ENCODE measurements at regions of chr3 and their contacts with region 1.

Region 1: DNA sequence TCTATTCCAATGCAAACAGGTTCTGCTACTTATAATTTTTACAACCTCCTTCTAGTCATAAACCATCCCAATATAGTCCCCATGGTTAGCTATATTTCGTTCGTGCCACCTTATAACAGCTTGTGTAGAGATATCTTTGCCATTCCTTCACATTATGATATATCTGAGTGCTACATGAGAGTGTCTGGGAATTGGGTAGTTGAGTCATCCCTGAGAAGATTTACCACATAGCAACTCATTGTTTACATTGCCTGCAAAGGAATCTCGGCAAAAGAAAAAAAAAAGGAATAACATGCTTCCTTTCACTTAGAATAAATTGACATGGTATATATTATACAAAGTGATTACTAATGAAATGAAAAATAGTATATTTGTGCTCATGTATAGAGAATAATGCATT is 86.0 kb upstream of the VGLL3 start:
- DNase-seq: no peak
- H3K4me3 Mint-ChIP-seq: no peak overlapping the region
- H3K27ac Mint-ChIP-seq: no peak overlapping the region
- H3K4me1 Mint-ChIP-seq: peaks cover 12% of the 10 kb centered on the region
- H3K27me3 Mint-ChIP-seq: no peaks in the 10 kb centered on the region
- CTCF ChIP-seq: no peak

Region 2: DNA sequence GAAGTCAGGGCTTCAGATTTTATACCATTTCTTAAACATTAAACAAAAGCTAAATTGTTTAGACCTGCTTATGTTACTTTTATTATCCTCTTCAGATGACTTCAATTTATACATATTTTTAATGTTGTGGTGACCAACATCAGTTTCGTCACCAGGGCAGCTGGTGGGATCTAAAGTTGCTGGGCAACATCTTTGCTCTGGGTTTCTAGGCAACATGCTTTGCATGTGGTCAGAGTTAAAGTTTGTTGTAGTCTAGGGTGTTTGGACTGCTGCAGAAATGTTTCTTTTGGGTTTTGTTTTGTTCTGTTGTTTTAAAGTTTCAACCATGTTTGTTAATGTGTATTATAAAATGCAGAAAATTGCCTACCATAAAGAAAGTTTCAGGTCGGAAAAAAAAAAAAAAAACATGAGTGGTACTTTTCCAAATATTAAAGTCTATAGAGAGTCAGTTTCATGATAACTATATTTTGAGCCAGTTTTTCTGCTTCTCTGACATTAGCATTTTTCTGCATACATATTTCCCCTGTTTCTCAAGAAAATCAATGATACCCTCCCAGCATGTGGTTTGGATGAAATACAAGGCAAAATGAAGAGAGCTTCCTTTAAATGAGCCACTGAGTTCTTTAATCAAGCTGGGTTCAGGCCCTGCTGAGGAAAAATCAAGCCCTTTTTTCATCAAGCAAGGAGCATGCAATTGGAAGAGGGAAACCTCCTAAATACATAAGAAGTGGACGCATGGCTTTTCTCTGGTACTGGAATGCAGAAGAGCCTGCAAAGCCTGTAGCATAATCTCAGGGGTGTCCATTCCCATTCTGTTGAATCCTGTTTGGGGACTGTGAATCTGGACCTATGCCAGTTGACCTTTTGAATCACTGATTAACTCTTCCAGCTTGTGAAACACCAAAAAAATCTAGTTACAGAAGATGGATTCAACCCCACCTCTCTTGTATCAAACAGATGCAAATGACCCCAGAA is 51.0 kb before region 1 on chr3:
- CTCF ChIA-PET with region 1: no interaction called
- intact Hi-C with region 1: loop called (anchors 5 kb)
- DNase-seq: peak; percentile 42
- H3K4me3 Mint-ChIP-seq: no peak overlapping the region
- H3K27ac Mint-ChIP-seq: peak overlapping the region; percentile 67
- H3K4me1 Mint-ChIP-seq: peaks cover 44% of the 10 kb centered on the region
- H3K27me3 Mint-ChIP-seq: no peaks in the 10 kb centered on the region
- CTCF ChIP-seq: no peak

Region 3: DNA sequence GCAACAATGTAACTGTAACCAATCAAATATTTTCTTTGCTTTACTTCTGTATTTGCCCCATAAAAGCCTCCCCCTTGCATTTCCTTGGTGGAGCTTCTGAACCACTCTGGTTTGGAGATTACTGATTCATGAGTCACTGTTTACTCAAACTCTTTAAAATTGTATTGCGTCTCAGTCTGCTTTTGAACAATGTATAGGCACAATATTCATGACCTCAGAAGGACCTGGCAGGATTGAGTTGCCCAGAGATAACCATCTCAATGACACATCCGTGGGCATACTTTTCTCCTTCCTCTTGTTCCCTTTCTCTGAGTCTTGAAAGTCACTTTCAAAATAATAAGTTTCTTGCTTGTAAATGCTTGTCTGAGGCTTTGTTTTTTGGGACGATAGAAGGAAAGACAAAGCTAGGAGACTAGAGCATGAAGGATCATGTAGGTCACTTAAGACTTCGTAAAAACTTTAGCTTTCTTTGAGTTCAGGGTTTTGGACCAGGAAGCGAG is 256.5 kb after region 1 on chr3:
- CTCF ChIA-PET with region 1: no interaction called
- intact Hi-C with region 1: no loop called
- DNase-seq: peak; percentile 59
- H3K4me3 Mint-ChIP-seq: peak overlapping the region; percentile 20
- H3K27ac Mint-ChIP-seq: peak overlapping the region; percentile 89
- H3K4me1 Mint-ChIP-seq: peaks cover 35% of the 10 kb centered on the region
- H3K27me3 Mint-ChIP-seq: no peaks in the 10 kb centered on the region
- CTCF ChIP-seq: no peak